Activated T-helper 1 cell treated with anti-CD3 and anti-CD28 coated beads, Interleukin-12 subunit alpha, Interleukin-12 subunit beta, Interleukin-2, Interleukin-4 antibody, amounts not matched to agents 30 ng/mL and 10 ng/mL and 1 ng/mL, durations not matched to agents 14 hours and 24 hours and 36 hours (primary cell): ENCODE measurements at regions of chr2 and their contacts with region 1.

Region 1: GRCh38 chr2:219160186-219161017 is at the start of gene NHEJ1:
- DNase-seq: peak; percentile 89
- H3K4me3 Mint-ChIP-seq: peak within 1 kb of the TSS; percentile 90
- H3K27ac Mint-ChIP-seq: peak within 1 kb of the TSS; percentile 99
- H3K4me1 Mint-ChIP-seq: peaks cover 20% of the 10 kb centered on the region
- H3K27me3 Mint-ChIP-seq: no peaks in the 10 kb centered on the region
- total RNA-seq, gene NHEJ1: 18.1 and 20.7 TPM in 2 replicates

Region 2: GRCh38 chr2:218406209-218406948 is 754.0 kb before region 1 on chr2:
- intact Hi-C with region 1: loop called (anchors 1 kb)
- DNase-seq: peak; percentile 90
- H3K4me3 Mint-ChIP-seq: peak overlapping the region; percentile 81
- H3K27ac Mint-ChIP-seq: peak overlapping the region; percentile 74
- H3K4me1 Mint-ChIP-seq: peaks cover 29% of the 10 kb centered on the region
- H3K27me3 Mint-ChIP-seq: no peaks in the 10 kb centered on the region

Region 3: GRCh38 chr2:219119422-219120043 is 40.9 kb before region 1 on chr2:
- intact Hi-C with region 1: no loop called
- DNase-seq: peak; percentile 31
- H3K4me3 Mint-ChIP-seq: no peak overlapping the region
- H3K27ac Mint-ChIP-seq: no peak overlapping the region
- H3K4me1 Mint-ChIP-seq: peaks cover 8% of the 10 kb centered on the region
- H3K27me3 Mint-ChIP-seq: no peaks in the 10 kb centered on the region

Region 4: GRCh38 chr2:219177552-219178376 is 17.4 kb after region 1 on chr2 and contains the start of gene RETREG2:
- intact Hi-C with region 1: loop called (anchors 1 kb)
- DNase-seq: peak; percentile 74
- H3K4me3 Mint-ChIP-seq: peak within 1 kb of the TSS; percentile 91
- H3K27ac Mint-ChIP-seq: peak within 1 kb of the TSS; percentile 96
- H3K4me1 Mint-ChIP-seq: peaks cover 72% of the 10 kb centered on the region
- H3K27me3 Mint-ChIP-seq: no peaks in the 10 kb centered on the region
- total RNA-seq, gene RETREG2: 58.4 and 61.5 TPM in 2 replicates

Region 5: GRCh38 chr2:219229305-219230058 is 69.1 kb after region 1 on chr2 and contains the starts of genes ANKZF1 and ATG9A:
- intact Hi-C with region 1: loop called (anchors 1 kb)
- DNase-seq: peak; percentile 98
- H3K4me3 Mint-ChIP-seq: peak within 1 kb of the TSS; percentile 97
- H3K27ac Mint-ChIP-seq: peak within 1 kb of the TSS; percentile 99
- H3K4me1 Mint-ChIP-seq: peaks cover 47% of the 10 kb centered on the region
- H3K27me3 Mint-ChIP-seq: no peaks in the 10 kb centered on the region
- total RNA-seq, gene ANKZF1: 112 and 117 TPM in 2 replicates
- total RNA-seq, gene ATG9A: 55.3 and 57.0 TPM in 2 replicates

Region 6: DNA sequence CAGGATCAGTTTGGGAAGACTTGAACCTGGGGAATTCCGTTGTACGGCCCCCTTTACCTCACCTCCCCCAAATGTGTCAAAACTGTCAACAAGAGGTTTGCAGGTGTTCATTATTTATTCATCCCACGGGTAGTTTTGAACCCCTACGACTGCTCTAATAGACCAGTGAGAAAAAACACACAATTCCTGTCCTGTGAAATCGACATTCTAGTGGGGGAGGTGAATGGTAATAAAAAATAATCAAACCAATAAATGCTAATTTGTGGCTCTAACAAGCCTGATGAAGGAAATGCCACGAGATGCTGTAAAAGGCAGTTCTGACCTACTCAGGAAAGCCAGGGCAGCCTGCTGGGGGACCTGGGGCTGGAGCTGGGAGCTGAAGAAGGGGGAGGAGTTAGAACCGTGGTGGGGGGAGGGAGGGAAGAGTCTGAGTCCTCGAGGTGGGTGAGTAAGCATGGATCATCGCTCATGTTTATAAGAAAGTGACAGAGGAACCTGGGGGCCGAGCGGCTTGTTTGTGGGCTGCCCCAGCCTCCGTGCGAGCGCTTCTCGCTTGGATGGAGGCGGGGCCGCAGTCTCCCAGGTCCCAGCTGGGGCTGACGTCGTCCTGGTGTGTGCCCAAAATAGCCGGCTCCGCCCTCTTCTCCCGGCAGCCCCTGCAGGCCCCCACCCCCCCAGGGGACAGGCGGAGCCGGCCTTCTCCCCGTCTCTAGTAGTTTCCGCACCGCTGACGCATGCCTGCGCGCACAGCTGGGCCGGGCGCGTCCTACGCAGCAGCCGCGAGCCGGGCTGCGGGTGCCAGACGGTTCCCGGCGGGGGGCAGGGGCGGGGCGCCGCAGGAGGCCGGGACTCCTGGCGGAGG is 118.5 kb after region 1 on chr2 and contains the start of gene DNAJB2:
- intact Hi-C with region 1: loop called (anchors 1 kb)
- DNase-seq: peak; percentile 99
- H3K4me3 Mint-ChIP-seq: peak within 1 kb of the TSS; percentile 94
- H3K27ac Mint-ChIP-seq: peak within 1 kb of the TSS; percentile 99
- H3K4me1 Mint-ChIP-seq: peaks cover 45% of the 10 kb centered on the region
- H3K27me3 Mint-ChIP-seq: peaks cover under 1% of the 10 kb centered on the region
- total RNA-seq, gene DNAJB2: 40.8 and 45.3 TPM in 2 replicates

Region 7: GRCh38 chr2:219331560-219332213 is 171.3 kb after region 1 on chr2:
- intact Hi-C with region 1: no loop called
- DNase-seq: peak; percentile 9
- H3K4me3 Mint-ChIP-seq: no peak overlapping the region
- H3K27ac Mint-ChIP-seq: no peak overlapping the region
- H3K4me1 Mint-ChIP-seq: no peaks in the 10 kb centered on the region
- H3K27me3 Mint-ChIP-seq: peaks cover 33% of the 10 kb centered on the region

Region 8: GRCh38 chr2:219388127-219388844 is 227.9 kb after region 1 on chr2:
- intact Hi-C with region 1: loop called (anchors 1 kb)
- DNase-seq: peak; percentile 95
- H3K4me3 Mint-ChIP-seq: peak overlapping the region; percentile 97
- H3K27ac Mint-ChIP-seq: peak overlapping the region; percentile 67
- H3K4me1 Mint-ChIP-seq: peaks cover 6% of the 10 kb centered on the region
- H3K27me3 Mint-ChIP-seq: peaks cover 23% of the 10 kb centered on the region